Endothelial cell of umbilical vein (primary cell): ENCODE measurements at regions of chr3 and their contacts with region 1.

Region 1: GRCh38 chr3:135965506-135966270 is at the start of gene PPP2R3A:
- DNase-seq: peak; percentile 88
- H3K4me3 ChIP-seq: peak within 1 kb of the TSS; percentile 61 to 95 (median 92)
- H3K27ac ChIP-seq: peak within 1 kb of the TSS; percentile 63
- H3K4me1 ChIP-seq: peaks cover 10% of the 10 kb centered on the region
- H3K27me3 ChIP-seq: peaks cover 5 to 6% of the 10 kb centered on the region in 2 experiments
- CTCF ChIP-seq: no peak
- POLR2A ChIP-seq: peak; percentile 37
- total RNA-seq, gene PPP2R3A: 13.8 and 14.6 TPM in 2 replicates

Region 2: GRCh38 chr3:135929670-135930069 is 36.0 kb before region 1 on chr3:
- CTCF ChIA-PET with region 1: no interaction called
- POLR2A ChIA-PET with region 1: no interaction called
- dilution Hi-C with region 1: no loop called
- intact Hi-C with region 1: no loop called
- DNase-seq: no peak
- H3K4me3 ChIP-seq: no peak overlapping the region
- H3K27ac ChIP-seq: no peak overlapping the region
- H3K4me1 ChIP-seq: no peaks in the 10 kb centered on the region
- H3K27me3 ChIP-seq: peaks cover 2 to 5% of the 10 kb centered on the region in 2 experiments
- CTCF ChIP-seq: no peak
- POLR2A ChIP-seq: no peak

Region 3: DNA sequence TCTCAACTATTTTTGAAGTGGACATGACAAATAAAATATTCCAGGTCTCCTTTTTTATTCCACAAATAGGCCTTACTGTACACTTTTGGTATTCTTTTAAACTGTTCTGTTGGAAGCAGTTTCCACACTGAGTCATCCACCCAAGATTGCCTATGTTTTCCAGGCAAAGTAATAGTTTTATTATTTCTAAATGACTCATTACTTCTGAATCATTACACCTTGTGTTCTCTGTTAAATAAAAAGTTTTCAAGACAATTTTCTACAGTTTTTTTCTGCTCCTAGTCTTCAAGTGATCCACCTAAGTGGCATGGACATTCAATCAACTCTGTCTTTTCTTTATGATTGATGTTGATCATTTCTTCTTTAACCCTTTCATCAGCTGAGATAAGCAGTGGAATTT is 26.4 kb after region 1 on chr3:
- CTCF ChIA-PET with region 1: interaction called, 14 read pairs
- POLR2A ChIA-PET with region 1: interaction called, 5 read pairs
- dilution Hi-C with region 1: no loop called
- intact Hi-C with region 1: loop called (anchors 1 kb)
- DNase-seq: peak; percentile 90
- H3K4me3 ChIP-seq: peak overlapping the region in 1 of 3 experiments; percentile 8
- H3K27ac ChIP-seq: peak overlapping the region; percentile 98
- H3K4me1 ChIP-seq: peaks cover 24% of the 10 kb centered on the region
- H3K27me3 ChIP-seq: no peaks in the 10 kb centered on the region
- CTCF ChIP-seq: no peak
- POLR2A ChIP-seq: no peak

Region 4: DNA sequence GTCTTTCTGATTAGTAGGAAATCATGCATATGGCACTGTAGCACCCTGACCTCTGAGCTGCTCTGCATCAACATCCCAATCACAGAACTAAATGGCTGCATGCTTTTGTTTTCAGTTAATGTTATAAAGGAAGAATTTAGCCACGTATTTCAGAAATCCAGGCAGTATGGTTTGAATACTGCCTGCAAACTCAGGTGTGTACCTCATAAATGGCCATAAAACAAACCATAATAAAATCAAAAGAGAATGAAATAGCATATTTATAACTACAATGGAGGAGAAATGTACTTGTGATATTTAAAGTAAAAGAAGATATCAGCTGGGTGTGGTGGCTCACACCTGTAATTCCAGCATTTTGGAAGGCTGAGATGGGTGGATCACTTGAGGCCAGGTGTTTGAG is 1086.6 kb after region 1 on chr3:
- CTCF ChIA-PET with region 1: no interaction called
- POLR2A ChIA-PET with region 1: no interaction called
- dilution Hi-C with region 1: no loop called
- intact Hi-C with region 1: loop called (anchors 1 kb)
- DNase-seq: no peak
- H3K4me3 ChIP-seq: no peak overlapping the region
- H3K27ac ChIP-seq: no peak overlapping the region
- H3K4me1 ChIP-seq: no peaks in the 10 kb centered on the region
- H3K27me3 ChIP-seq: peaks cover 2 to 17% of the 10 kb centered on the region in 2 experiments
- CTCF ChIP-seq: no peak
- POLR2A ChIP-seq: no peak